ENCODE measurements at regions of chr15 and their contacts with region 1.

Region 1: GRCh38 chr15:57626713-57627440 is 35.2 kb downstream of the MYZAP start:
- DNase-seq: no peak
- ATAC-seq: no peak
- H3K4me3 Mint-ChIP-seq: no peak overlapping the region
- H3K27ac Mint-ChIP-seq: no peak overlapping the region
- H3K4me1 Mint-ChIP-seq: peaks cover 3% of the 10 kb centered on the region
- H3K27me3 Mint-ChIP-seq: no peaks in the 10 kb centered on the region
- CTCF ChIP-seq: no peak

Region 2: GRCh38 chr15:57640935-57641682 is 14.2 kb after region 1 on chr15:
- CTCF ChIA-PET with region 1: interaction called, 22 read pairs
- POLR2A ChIA-PET with region 1: no interaction called
- DNase-seq: peak; percentile 38
- ATAC-seq: peak; percentile 74
- H3K4me3 Mint-ChIP-seq: no peak overlapping the region
- H3K27ac Mint-ChIP-seq: no peak overlapping the region
- H3K4me1 Mint-ChIP-seq: no peaks in the 10 kb centered on the region
- H3K27me3 Mint-ChIP-seq: peaks cover 48% of the 10 kb centered on the region
- CTCF ChIP-seq: no peak; the same call in 1 of the 2 replicates

Measured in WTC11 (cell line).